Right ventricle myocardium inferior (tissue), 1 donor: ENCODE measurements at regions of chr22 and their contacts with region 1.

Region 1: DNA sequence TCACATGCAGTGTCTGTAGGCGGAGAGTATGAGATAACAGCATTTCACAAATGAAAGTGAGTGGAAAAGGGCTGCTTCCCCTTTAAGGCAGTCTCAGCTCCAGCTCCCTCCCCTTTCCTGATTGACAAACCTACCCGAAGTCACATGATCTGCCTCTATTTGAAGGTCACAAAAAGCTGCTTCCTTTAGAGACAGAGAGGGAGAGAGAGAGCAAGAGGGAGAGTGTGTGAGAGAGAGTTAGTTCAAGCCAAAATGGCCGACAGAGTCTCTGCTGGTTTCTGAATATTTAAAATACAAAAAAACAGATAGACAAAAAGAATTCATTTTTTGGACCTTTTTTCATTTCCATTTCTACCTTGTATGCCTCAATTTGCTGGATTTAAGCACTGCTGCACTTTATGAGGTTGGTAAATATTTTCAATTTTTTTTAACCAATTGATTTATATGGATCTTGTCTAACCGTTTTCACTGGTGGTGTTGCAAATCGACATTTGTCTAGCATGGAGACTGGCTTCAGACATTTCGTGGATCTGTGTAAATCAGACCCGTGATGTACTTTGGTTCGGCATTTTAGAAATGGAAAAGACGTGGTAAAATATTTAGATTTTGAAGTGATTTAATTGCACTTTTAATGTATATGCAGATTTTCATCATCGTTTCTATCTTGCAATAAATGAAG is at the start of gene TNRC6B:
- DNase-seq: no peak
- ATAC-seq: peak; percentile 98
- total RNA-seq, gene TNRC6B: 43.3 TPM

Region 2: DNA sequence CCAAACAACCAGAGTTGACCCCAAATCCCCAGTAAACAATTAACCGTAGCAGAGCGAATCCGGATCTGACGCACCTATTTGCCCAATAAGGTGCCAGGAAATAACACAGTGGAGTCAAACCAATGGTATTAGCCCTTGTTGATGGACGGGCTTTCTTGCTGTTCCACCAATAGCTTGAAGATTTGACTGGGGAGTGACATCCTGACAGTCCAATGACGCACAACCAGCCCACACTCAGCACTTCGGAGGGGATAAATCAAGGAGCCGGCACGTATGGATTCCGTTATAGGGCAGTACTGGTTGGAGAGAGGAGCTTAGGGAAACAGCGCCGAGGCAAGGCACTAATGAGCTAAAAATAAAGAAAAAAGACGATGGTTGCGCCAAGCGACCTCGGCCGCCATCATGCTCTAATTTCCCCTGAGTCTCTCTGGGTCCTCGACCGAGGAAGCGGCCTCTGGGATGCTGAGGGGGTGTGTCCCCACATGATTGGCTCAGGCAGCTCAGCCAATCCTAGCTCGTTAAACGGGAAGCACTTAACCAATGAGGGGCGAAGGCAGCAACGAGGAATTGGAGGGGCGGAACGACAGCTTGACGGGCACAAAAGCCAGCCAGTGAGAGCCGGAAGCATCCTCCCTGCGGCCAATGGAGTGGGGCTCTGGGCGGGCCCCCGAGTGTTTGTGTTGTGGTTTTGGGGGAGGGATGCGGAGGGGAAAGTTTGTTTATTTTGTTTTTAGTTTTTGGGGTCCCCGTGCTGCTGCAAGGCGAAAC is 133.6 kb before region 1 on chr22:
- intact Hi-C with region 1: loop called (anchors 5 kb)
- DNase-seq: peak; percentile 97
- ATAC-seq: peak; percentile 95

Region 3: GRCh38 chr22:40070701-40071100 is 107.2 kb before region 1 on chr22:
- intact Hi-C with region 1: loop called (anchors 5 kb)
- DNase-seq: no peak
- ATAC-seq: peak; percentile 68

Region 4: DNA sequence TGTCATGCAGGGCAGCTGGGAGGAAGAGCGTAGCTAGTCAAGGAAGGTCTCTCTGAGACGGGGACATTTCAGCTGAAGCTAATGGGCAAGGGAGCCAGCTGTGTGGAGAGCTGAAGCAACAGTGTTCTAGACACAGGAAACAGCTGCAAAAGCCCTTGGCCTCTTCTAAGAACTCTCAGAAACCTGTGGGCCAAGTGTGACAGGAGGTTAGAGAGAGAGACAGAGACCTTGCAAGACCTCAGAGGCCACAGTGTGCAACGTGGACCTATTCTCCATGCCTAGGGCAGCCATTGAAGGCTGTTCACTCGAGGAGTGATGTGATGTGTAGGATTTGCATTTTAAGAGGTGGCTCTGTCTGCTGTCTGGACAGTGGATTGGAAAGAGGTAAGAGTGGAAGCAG is 48.9 kb before region 1 on chr22:
- intact Hi-C with region 1: no loop called
- DNase-seq: no peak
- ATAC-seq: no peak

Region 5: DNA sequence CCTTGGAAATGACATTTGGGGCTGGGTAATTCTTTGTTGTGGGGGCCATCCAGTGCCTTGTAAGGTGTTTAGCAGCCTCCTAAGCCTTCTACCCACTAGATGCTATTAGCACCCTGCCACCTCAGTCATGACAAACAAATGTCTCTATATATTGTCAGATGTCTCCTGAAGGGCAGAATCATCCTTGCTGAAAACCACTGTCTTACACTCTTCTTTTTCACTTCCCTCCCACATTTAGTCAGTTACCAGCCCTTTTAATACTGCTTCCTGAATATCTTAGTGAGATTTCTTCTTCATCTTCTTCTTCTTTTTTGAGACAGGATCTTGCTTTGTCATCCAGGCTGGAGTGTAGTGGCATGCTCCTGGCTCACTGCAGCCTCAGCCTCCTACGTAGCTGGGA is 32.9 kb after region 1 on chr22:
- intact Hi-C with region 1: loop called (anchors 5 kb)
- DNase-seq: no peak
- ATAC-seq: no peak

Region 6: DNA sequence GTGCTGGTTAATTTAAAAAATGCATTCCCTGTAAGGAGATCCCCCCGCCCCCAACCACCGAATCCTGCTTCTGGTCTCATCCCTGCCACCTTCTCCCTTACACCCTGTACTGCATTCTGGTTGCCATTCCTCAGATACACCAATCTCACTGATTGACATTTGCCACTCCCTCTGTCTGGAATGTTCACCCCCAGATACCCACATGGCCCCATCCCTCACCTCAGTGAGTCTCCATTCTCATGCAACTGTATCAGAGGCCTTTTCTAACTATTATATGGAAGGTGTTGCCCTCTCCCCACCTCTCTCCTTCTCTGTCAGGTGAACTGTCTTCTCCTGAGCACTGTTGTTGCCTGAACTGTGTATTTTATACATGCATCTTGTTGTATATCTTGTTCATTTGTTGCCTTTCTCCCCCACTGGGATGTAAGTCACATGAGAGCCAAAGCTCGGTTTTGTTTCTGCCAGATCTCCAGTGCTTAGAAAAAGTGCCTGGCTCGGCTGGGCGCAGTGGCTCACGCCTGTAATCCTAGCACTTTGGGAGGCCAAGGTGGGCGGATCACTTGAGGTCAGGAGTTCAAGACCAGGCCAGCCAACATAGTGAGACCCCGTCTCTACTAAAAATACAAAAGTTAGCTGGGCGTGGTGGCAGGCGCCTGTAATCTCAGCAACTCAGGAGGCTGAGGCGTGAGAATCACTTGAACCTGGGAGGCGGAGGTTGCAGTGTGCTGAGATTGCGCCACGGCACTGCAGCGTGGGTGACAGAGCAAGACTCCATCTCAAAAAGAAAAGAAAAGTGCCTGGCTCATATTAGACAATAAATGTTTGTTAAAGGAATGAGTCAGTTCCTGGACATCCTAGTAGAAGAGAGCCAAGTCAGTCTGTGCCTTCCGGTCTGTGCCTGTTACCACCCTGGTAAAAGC is 60.8 kb after region 1 on chr22:
- intact Hi-C with region 1: loop called (anchors 5 kb)
- DNase-seq: no peak
- ATAC-seq: peak; percentile 29

Region 7: DNA sequence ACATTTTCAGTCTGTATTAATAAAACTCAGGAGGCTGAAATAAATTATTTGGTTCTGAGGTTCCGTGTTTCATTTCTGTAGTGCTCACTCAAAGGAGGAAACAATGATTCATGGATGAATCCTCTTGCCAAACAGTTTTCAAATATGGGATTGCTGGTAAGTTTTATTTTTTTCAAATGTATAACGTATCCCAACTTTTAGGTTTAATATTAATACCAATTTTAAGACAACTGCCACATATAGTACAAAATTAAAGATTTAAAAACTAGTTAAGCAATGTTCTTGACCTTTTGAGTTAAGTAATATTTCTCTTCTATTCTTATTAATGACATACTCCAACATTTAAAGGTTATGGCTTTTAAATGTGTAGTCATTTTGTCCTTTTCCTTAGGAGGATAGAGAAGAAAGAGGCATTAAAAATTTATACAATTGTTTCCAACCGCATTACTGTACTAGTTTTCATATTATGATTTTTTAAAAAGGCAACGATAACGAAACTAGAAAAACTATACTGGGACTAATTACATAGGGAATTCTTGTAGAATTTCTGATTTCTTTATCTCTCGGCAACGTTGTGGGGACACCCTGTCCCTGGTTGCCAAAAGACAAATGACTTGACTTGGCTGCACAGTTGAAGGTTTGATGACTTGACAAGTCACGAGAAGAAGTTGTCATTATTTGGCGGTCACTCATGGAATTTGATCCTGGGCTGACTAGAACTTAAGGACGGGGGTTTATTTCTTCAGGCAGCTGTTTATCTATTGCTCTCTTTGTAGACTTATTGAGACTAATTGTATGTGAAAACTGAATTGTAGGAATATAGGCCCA is 99.3 kb after region 1 on chr22:
- intact Hi-C with region 1: loop called (anchors 1 kb)
- DNase-seq: no peak
- ATAC-seq: peak; percentile 73

Region 8: GRCh38 chr22:40346178-40347118 is 168.6 kb after region 1 on chr22 and contains the start of gene ADSL:
- intact Hi-C with region 1: loop called (anchors 5 kb)
- DNase-seq: peak; percentile 94
- ATAC-seq: peak; percentile 98
- total RNA-seq, gene ADSL: 55.3 TPM